Astrocyte of the cerebellum (primary cell): ENCODE measurements at regions of chr10 and their contacts with region 1.

Region 1: DNA sequence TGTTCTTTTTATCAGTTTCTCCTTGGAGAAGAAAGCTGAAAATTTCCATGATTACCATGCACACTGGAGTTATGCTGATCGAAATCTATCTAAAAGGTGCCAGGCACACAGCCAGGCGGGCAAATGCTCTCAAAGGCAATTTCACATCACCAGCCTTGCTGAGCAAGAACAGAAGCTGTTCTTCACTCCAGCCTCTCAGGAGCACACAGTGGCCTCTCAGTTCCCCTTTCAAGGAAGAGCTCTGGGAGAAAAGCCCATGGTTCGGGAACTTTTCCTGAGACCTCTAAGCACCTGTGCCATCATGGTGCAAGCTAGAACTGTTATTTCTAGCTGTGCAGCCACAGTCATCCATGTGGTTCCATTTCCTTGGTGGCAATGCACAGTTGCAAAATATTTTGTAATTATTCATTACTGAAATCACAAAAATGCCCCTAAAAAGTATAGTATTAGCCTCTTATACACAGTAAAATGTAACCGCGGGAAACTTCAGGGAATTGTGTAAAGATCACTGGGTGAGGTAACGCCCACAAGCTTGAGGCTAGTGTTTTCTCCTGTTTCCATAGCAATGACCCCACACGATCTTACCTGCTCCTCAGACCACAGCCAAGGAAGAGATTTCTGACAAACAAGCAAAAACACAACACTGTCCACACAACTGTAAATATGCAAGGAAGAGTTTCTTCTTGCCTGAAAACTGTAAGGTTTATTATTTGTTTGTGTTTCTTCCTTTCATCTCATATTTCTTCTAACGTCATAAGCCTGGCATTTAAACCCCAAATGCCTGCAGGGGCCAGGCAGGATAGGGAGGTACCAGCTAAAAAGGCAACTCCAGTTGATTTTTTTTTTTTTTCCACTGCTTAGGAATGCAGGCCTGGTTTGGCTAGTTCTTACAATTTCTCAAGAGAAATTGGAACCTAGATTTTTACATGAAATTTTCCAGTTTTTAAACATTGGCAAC is 121.1 kb downstream of the FAM107B start:
- DNase-seq: peak; percentile 59
- H3K4me3 ChIP-seq: no peak overlapping the region
- CTCF ChIP-seq: no peak

Region 2: GRCh38 chr10:14605231-14605925 is 48.2 kb before region 1 on chr10:
- in situ Hi-C with region 1: no loop called
- DNase-seq: no peak
- H3K4me3 ChIP-seq: peak overlapping the region; percentile 57
- CTCF ChIP-seq: no peak

Region 3: GRCh38 chr10:14617852-14618251 is 35.7 kb before region 1 on chr10:
- in situ Hi-C with region 1: loop called (anchors 5 kb)
- DNase-seq: no peak
- H3K4me3 ChIP-seq: no peak overlapping the region
- CTCF ChIP-seq: no peak

Region 4: GRCh38 chr10:14878266-14879054 is 224.9 kb after region 1 on chr10 and contains the start of gene SUV39H2:
- in situ Hi-C with region 1: no loop called
- DNase-seq: peak; percentile 87
- H3K4me3 ChIP-seq: peak within 1 kb of the TSS; percentile 97
- CTCF ChIP-seq: no peak